Mammary epithelial cell (primary cell): ENCODE measurements at regions of chr6 and their contacts with region 1.

Region 1: GRCh38 chr6:85404502-85405174 is 45.2 kb upstream of the NT5E start:
- DNase-seq: peak; percentile 94
- H3K4me3 ChIP-seq: peak overlapping the region in 1 of 3 experiments; percentile 32
- H3K27ac ChIP-seq: peak overlapping the region; percentile 96
- H3K4me1 ChIP-seq: peaks cover 59% of the 10 kb centered on the region
- H3K27me3 ChIP-seq: no peaks in the 10 kb centered on the region
- CTCF ChIP-seq: no peak

Region 2: DNA sequence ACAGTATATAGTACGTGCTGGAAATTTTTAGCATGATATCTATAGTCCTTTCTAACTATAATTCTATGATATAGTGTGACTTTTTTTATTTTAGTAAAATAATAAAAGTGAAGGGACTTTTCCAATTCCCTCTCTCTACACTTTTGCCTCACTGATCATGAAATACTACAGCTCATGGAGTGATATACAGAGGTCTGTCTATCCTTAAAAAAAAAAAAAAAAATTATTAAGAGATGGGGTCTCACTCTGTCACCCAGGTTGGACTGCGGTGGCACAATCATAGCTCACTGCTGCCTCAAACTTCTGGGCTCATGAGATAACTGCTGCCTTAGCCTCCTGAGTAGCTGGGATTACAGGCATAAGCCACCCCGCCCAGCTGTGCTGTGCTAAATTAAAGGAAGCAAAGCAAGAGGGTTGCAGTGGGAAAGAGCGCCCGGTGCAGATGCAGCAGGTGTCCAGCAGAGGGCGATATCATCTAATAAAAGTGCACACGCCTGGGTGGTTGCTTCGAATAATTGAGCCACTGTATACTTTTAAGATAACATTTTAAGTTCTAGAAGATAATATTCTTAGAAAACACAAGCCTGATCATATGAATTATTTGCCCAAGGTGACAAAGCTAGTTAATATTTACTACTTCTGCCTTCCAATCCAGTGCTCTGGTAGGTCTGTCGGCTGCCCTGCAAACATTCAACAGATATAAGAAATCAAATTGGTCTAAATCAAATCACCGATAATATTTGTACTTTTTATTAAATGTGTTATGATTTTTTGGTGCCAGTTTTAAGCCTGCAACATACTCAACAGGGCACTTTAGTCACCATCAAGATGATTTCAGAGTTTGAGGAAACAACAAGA is 49.6 kb before region 1 on chr6:
- CTCF ChIA-PET with region 1: no interaction called
- dilution Hi-C with region 1: loop called (anchors 5 kb)
- in situ Hi-C with region 1: no loop called
- intact Hi-C with region 1: loop called (anchors 1 kb)
- DNase-seq: peak; percentile 64
- H3K4me3 ChIP-seq: no peak overlapping the region
- H3K27ac ChIP-seq: no peak overlapping the region
- H3K4me1 ChIP-seq: peaks cover 6% of the 10 kb centered on the region
- H3K27me3 ChIP-seq: no peaks in the 10 kb centered on the region
- CTCF ChIP-seq: peak; percentile 91 to 96

Region 3: GRCh38 chr6:85360794-85361642 is 43.6 kb before region 1 on chr6:
- CTCF ChIA-PET with region 1: interaction called, 7 read pairs
- dilution Hi-C with region 1: loop called (anchors 5 kb)
- in situ Hi-C with region 1: no loop called
- intact Hi-C with region 1: loop called (anchors 1 kb)
- DNase-seq: peak; percentile 93
- H3K4me3 ChIP-seq: no peak overlapping the region
- H3K27ac ChIP-seq: peak overlapping the region; percentile 83
- H3K4me1 ChIP-seq: peaks cover 44% of the 10 kb centered on the region
- H3K27me3 ChIP-seq: no peaks in the 10 kb centered on the region
- CTCF ChIP-seq: no peak

Region 4: GRCh38 chr6:85449818-85450759 is 45.5 kb after region 1 on chr6 and contains the start of gene NT5E:
- CTCF ChIA-PET with region 1: interaction called, 4 read pairs
- dilution Hi-C with region 1: no loop called
- in situ Hi-C with region 1: no loop called
- intact Hi-C with region 1: loop called (anchors 1 kb)
- DNase-seq: peak; percentile 77
- H3K4me3 ChIP-seq: peak within 1 kb of the TSS; percentile 71 to 87 (median 75)
- H3K27ac ChIP-seq: peak within 1 kb of the TSS; percentile 84
- H3K4me1 ChIP-seq: peaks cover 38% of the 10 kb centered on the region
- H3K27me3 ChIP-seq: no peaks in the 10 kb centered on the region
- CTCF ChIP-seq: peak in 1 of 2 donors; percentile 11
- total RNA-seq, gene NT5E: 74.2 to 228 TPM

Region 5: DNA sequence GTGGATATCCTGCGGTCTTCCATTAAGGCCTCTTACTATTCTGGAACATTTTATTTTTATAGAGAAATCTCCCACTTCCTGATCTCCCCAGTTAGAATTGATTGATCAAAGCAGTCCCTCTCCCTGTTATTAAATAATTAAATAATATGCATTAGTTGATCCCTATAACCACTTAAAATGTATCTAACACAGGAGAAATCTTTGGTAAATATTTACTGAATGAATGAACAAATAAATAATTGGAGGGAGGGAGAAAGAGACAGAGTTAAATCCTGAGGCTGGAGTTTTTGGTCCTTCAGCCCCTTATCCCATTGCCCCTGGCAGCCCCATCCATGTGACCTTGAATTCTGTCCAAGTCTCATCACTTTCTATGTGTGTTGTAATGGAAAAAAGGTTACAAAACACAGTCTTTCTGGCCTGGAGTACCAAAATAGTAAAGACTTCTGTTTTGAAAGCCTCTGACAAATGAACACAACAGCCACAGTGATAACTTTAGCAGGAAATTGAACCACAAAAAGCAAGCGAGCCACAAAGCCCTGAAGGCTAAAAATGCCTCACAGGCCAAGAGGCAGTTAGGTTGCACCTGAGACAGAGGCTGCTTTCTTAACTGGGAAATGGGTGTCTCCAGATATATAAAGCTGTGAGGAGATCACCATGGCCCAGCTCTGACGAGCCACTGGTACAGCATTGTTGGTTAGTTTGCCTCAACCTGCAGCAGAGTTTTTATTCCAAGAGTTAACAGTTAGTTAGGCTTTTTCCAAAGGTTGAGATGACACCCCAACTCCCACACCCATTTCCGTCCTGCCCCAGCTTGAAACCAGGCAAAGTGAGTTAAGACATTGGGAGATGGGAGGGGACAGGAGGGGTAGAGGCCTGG is 56.5 kb after region 1 on chr6:
- CTCF ChIA-PET with region 1: interaction called, 3 read pairs
- dilution Hi-C with region 1: no loop called
- in situ Hi-C with region 1: no loop called
- intact Hi-C with region 1: loop called (anchors 1 kb)
- DNase-seq: peak; percentile 86
- H3K4me3 ChIP-seq: no peak overlapping the region
- H3K27ac ChIP-seq: peak overlapping the region; percentile 61
- H3K4me1 ChIP-seq: peaks cover 100% of the 10 kb centered on the region
- H3K27me3 ChIP-seq: no peaks in the 10 kb centered on the region
- CTCF ChIP-seq: no peak

Region 6: GRCh38 chr6:85482905-85483700 is 78.5 kb after region 1 on chr6:
- CTCF ChIA-PET with region 1: no interaction called
- dilution Hi-C with region 1: loop called (anchors 5 kb)
- in situ Hi-C with region 1: no loop called
- intact Hi-C with region 1: loop called (anchors 1 kb)
- DNase-seq: peak; percentile 57
- H3K4me3 ChIP-seq: no peak overlapping the region
- H3K27ac ChIP-seq: no peak overlapping the region
- H3K4me1 ChIP-seq: no peaks in the 10 kb centered on the region
- H3K27me3 ChIP-seq: no peaks in the 10 kb centered on the region
- CTCF ChIP-seq: peak; percentile 97 to 99

Region 7: DNA sequence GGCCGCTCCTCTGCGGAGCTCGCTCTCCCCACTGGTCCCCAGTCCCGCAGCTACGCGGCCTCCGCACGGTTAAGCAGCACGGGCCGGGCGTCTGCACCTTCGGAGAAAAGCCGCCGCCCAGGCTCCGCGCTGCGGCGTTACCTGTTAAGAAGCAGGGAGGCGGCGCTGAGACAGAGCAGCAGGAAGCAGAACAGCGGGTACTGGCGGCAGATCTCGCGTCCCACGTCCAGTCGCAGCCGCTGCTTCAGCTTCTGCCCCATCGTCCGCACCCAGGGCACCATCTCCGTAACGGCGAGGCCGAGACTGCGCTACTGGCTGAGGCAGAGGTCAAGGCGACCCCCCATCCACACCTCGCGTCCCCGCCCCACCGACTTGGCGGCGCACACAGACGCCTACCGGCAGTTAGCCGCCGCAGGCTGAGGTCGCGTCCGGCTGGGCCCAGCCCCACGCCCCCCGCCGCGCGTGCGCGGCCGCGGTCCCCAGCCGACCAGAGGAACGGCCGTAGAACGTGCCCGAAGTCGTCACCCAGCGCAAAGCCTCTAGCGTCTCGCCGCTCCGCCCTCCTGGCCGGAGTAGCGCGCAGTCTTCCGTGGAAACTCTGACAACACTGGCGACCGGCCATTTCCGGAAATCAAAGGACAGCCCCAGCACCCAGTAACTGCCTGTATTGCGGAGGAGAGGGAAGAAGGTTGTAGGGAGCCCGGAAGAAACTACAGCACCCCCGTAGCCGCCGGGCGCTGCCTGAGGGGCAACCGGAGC is 189.0 kb after region 1 on chr6 and contains the start of gene SNX14:
- CTCF ChIA-PET with region 1: no interaction called
- dilution Hi-C with region 1: no loop called
- in situ Hi-C with region 1: no loop called
- intact Hi-C with region 1: loop called (anchors 5 kb)
- DNase-seq: peak; percentile 93
- H3K4me3 ChIP-seq: peak within 1 kb of the TSS; percentile 87 to 94 (median 88)
- H3K27ac ChIP-seq: peak within 1 kb of the TSS; percentile 79
- H3K4me1 ChIP-seq: peaks cover 4% of the 10 kb centered on the region
- H3K27me3 ChIP-seq: no peaks in the 10 kb centered on the region
- CTCF ChIP-seq: peak in 1 of 2 donors; percentile 1
- total RNA-seq, gene SNX14: 76.8 to 87.6 TPM